ENCODE measurements at regions of chr10 and their contacts with region 1.

Region 1: DNA sequence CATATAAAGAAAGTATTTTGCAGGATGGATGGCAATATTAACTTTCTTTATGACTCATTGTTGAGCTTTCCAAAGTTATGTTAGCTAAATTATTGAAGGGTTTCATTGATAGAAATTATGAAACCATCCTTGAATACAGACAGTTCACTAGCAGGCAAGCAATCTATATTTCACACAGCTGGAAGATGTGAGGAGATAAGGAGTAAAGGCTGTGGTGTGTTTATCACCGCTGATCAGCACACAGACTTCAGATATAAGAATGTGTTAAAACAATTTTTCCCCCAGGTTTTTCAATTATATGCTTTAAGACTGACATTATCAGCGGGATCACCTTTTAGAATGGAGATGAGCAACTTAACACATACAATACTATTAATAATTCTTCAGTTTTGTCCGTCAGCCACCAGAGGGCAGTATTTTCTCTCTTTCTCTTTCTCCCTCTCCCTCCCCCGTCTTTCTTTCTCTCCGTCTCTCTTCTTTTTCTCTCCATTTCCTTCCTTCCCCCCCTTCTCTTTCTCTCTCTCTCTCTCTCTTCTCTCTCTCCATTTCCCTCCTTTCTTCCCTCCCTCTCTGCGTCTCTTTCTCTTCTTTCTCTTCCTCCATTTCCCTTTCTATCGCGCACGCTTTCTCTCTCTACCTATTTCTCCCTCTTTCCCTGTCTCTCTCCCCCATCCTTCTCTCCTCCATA is 62.9 kb upstream of the FAM171A1 start:
- DNase-seq: no peak
- ATAC-seq: peak; percentile 76
- H3K4me3 ChIP-seq: peak overlapping the region; percentile 9 to 27; a peak in 1 of 4 replicates
- H3K27ac ChIP-seq: no peak overlapping the region
- H3K4me1 ChIP-seq: no peaks in the 10 kb centered on the region
- H3K27me3 ChIP-seq: no peaks in the 10 kb centered on the region
- CTCF ChIP-seq: peak; percentile 63; the same call in 1 of the 2 replicates

Region 2: GRCh38 chr10:15325243-15325943 is 108.6 kb before region 1 on chr10:
- CTCF ChIA-PET with region 1: no interaction called
- POLR2A ChIA-PET with region 1: no interaction called
- in situ Hi-C with region 1: no loop called
- intact Hi-C with region 1: no loop called
- DNase-seq: no peak
- ATAC-seq: no peak
- H3K4me3 ChIP-seq: no peak overlapping the region
- H3K27ac ChIP-seq: no peak overlapping the region
- H3K4me1 ChIP-seq: no peaks in the 10 kb centered on the region
- H3K27me3 ChIP-seq: no peaks in the 10 kb centered on the region
- CTCF ChIP-seq: no peak

Region 3: DNA sequence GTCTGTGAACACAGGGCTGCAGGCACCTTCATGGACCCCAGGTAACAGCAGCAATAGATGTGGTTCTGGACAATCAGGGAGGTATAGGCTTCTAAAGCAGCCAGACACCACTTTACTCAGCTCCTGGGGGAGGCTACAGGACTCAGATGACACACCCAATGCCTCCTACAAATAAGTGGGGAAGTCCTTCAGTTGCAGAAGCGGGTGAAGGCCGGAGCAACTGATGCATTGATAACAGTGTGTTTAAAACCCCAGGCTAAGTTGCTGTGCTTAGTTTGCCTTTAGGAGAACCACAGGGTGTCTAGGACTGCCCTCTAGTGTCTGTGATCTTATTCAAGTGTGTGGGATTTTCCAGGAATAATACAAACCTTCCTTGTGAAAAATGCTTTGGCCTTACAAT is 291.6 kb after region 1 on chr10:
- CTCF ChIA-PET with region 1: no interaction called
- POLR2A ChIA-PET with region 1: no interaction called
- in situ Hi-C with region 1: no loop called
- intact Hi-C with region 1: loop called (anchors 1 kb)
- DNase-seq: no peak
- ATAC-seq: no peak
- H3K4me3 ChIP-seq: no peak overlapping the region
- H3K27ac ChIP-seq: no peak overlapping the region
- H3K4me1 ChIP-seq: no peaks in the 10 kb centered on the region
- H3K27me3 ChIP-seq: no peaks in the 10 kb centered on the region; the same call in 1 of the 2 replicates
- CTCF ChIP-seq: peak; percentile 68

Measured in Panc1 (cell line).